ENCODE measurements at regions of chr14 and their contacts with region 1.

Region 1: GRCh38 chr14:95011445-95012006 is 145.8 kb downstream of the DICER1 start:
- DNase-seq: peak; percentile 75
- H3K4me3 ChIP-seq: peak overlapping the region in 2 of 4 donors; percentile 6 to 15
- H3K27ac ChIP-seq: peak overlapping the region; percentile 6 to 76 (median 68)
- H3K4me1 ChIP-seq: peaks cover 0 to 50% (median 43%) of the 10 kb centered on the region in 4 donors
- H3K27me3 ChIP-seq: no peaks in the 10 kb centered on the region
- CTCF ChIP-seq: no peak
- EP300 ChIP-seq: peak in 2 of 4 donors; percentile 58 to 68
- POLR2A ChIP-seq: no peak

Region 2: GRCh38 chr14:94921882-94922585 is 89.5 kb before region 1 on chr14:
- intact Hi-C with region 1: no loop called
- DNase-seq: no peak
- H3K4me3 ChIP-seq: no peak overlapping the region
- H3K27ac ChIP-seq: no peak overlapping the region
- H3K4me1 ChIP-seq: no peaks in the 10 kb centered on the region
- H3K27me3 ChIP-seq: no peaks in the 10 kb centered on the region
- CTCF ChIP-seq: no peak
- EP300 ChIP-seq: no peak
- POLR2A ChIP-seq: no peak

Region 3: GRCh38 chr14:94971750-94972149 is 39.8 kb before region 1 on chr14:
- intact Hi-C with region 1: loop called (anchors 5 kb)
- DNase-seq: peak; percentile 91
- H3K4me3 ChIP-seq: peak overlapping the region in 3 of 4 donors; percentile 12 to 25 (median 14)
- H3K27ac ChIP-seq: peak overlapping the region; percentile 64 to 83 (median 78)
- H3K4me1 ChIP-seq: peaks cover 0 to 15% (median 10%) of the 10 kb centered on the region in 4 donors
- H3K27me3 ChIP-seq: no peaks in the 10 kb centered on the region
- CTCF ChIP-seq: no peak
- EP300 ChIP-seq: peak in 3 of 4 donors; percentile 51 to 83 (median 61)
- POLR2A ChIP-seq: no peak

Region 4: GRCh38 chr14:95040708-95041476 is 29.4 kb after region 1 on chr14:
- intact Hi-C with region 1: loop called (anchors 2 kb)
- DNase-seq: peak; percentile 40
- H3K4me3 ChIP-seq: no peak overlapping the region
- H3K27ac ChIP-seq: peak overlapping the region in 1 of 4 donors; percentile 37
- H3K4me1 ChIP-seq: peaks cover 0 to 12% (median 9%) of the 10 kb centered on the region in 4 donors
- H3K27me3 ChIP-seq: no peaks in the 10 kb centered on the region
- CTCF ChIP-seq: no peak
- EP300 ChIP-seq: no peak
- POLR2A ChIP-seq: no peak

Region 5: GRCh38 chr14:95046711-95047681 is 35.5 kb after region 1 on chr14:
- intact Hi-C with region 1: loop called (anchors 2 kb)
- DNase-seq: peak; percentile 90
- H3K4me3 ChIP-seq: no peak overlapping the region
- H3K27ac ChIP-seq: peak overlapping the region in 3 of 4 donors; percentile 68 to 77 (median 71)
- H3K4me1 ChIP-seq: peaks cover 0 to 23% (median 21%) of the 10 kb centered on the region in 4 donors
- H3K27me3 ChIP-seq: no peaks in the 10 kb centered on the region
- CTCF ChIP-seq: no peak
- EP300 ChIP-seq: peak; percentile 37 to 90 (median 66)
- POLR2A ChIP-seq: no peak

Measured in sigmoid colon (tissue), 7 donors.